CD4-positive, alpha-beta T cell (primary cell): ENCODE measurements at regions of chr9 and their contacts with region 1.

Region 1: DNA sequence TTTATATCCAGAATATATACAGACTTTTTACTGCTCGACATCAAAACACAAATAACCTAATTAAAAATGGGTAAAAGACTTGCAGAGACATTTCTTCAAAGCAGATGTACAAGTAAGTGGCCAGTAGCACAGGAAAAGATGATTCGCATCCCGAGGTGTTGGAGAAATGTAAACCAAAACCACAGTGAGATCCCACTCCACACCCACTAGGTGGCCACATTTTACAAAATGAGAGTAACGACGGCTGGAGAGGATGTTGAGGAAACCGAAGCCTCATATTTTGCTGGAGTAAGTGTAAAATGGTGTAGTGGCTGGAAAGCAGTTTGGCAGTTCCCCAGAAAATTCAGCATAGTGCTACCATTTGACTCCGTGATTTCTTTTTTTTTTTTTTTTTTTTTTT is 21.2 kb upstream of the GBGT1 start:
- DNase-seq: peak in 7 of 14 experiments; percentile 16 to 70 (median 42)
- ATAC-seq: peak; percentile 58
- H3K4me3 ChIP-seq: no peak overlapping the region
- H3K4me3 Mint-ChIP-seq: peak overlapping the region; percentile 12
- H3K27ac ChIP-seq: no peak overlapping the region
- H3K27ac Mint-ChIP-seq: no peak overlapping the region
- H3K4me1 ChIP-seq: peaks cover 12% of the 10 kb centered on the region
- H3K4me1 Mint-ChIP-seq: peaks cover 19% of the 10 kb centered on the region
- H3K27me3 ChIP-seq: peaks cover 8 to 14% of the 10 kb centered on the region in 2 experiments
- H3K27me3 Mint-ChIP-seq: peaks cover 31% of the 10 kb centered on the region
- CTCF ChIP-seq: peak; percentile 55

Region 2: DNA sequence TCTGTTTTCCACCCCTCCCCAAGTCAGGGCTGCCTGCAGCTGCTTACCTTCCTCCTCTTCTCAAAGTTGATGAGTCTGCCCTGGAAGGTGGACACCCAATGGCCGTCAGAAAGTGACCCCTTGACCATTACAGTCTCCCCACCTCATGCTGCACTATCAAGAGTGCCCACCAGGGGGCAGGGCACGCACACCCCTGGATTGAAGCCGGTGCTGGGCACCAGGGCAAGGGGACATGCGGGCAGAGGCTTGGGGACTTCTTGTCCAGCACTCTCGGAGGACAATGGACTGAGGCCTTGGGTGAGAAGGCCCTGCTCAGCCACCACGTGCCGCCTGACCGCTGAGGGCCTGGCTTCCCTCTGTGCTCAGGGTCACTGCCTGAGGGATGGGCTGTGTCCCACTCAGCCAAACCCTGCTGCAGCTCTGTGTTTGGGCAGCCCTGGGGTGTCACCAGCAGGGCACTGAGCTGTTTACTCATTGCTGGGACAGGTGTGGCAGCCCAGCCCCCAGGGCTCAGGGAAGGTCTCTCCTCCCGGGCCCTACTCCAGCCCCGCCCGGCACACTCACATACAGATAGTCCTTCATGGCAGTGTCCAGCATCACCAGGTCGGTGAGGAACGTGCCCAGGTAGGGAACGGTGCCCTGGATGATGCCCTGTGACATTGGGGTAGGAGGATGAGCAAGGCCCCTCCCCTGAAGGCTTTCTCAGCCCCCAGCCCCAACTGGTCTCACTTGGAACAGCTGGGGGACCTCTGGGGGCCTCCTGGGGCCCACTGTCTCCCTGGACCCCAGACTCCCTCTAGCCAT is 81.6 kb before region 1 on chr9:
- CTCF ChIA-PET with region 1: no interaction called
- POLR2A ChIA-PET with region 1: no interaction called
- intact Hi-C with region 1: loop called (anchors 1 kb)
- DNase-seq: peak; percentile 38 to 76 (median 50)
- ATAC-seq: peak; percentile 50
- H3K4me3 ChIP-seq: no peak overlapping the region
- H3K4me3 Mint-ChIP-seq: peak overlapping the region; percentile 11
- H3K27ac ChIP-seq: peak overlapping the region in 1 of 2 donors; percentile 19
- H3K27ac Mint-ChIP-seq: peak overlapping the region; percentile 51
- H3K4me1 ChIP-seq: no peaks in the 10 kb centered on the region
- H3K4me1 Mint-ChIP-seq: no peaks in the 10 kb centered on the region
- H3K27me3 ChIP-seq: no peaks in the 10 kb centered on the region
- H3K27me3 Mint-ChIP-seq: no peaks in the 10 kb centered on the region
- CTCF ChIP-seq: peak; percentile 96

Region 3: GRCh38 chr9:133199648-133200321 is 14.8 kb after region 1 on chr9:
- CTCF ChIA-PET with region 1: interaction called, 4 read pairs
- POLR2A ChIA-PET with region 1: no interaction called
- intact Hi-C with region 1: loop called in 1 of 2 experiments (anchors 1 kb)
- DNase-seq: peak in 9 of 14 experiments; percentile 31 to 66 (median 43)
- ATAC-seq: peak; percentile 96
- H3K4me3 ChIP-seq: peak overlapping the region; percentile 34
- H3K4me3 Mint-ChIP-seq: peak overlapping the region; percentile 81
- H3K27ac ChIP-seq: peak overlapping the region in 1 of 2 donors; percentile 7
- H3K27ac Mint-ChIP-seq: peak overlapping the region; percentile 58
- H3K4me1 ChIP-seq: peaks cover 2% of the 10 kb centered on the region
- H3K4me1 Mint-ChIP-seq: peaks cover 10% of the 10 kb centered on the region
- H3K27me3 ChIP-seq: peaks cover 2 to 8% of the 10 kb centered on the region in 2 experiments
- H3K27me3 Mint-ChIP-seq: peaks cover 5% of the 10 kb centered on the region
- CTCF ChIP-seq: peak; percentile 58

Region 4: GRCh38 chr9:133406480-133407307 is 221.7 kb after region 1 on chr9:
- CTCF ChIA-PET with region 1: no interaction called
- POLR2A ChIA-PET with region 1: no interaction called
- intact Hi-C with region 1: loop called (anchors 1 to 2 kb)
- DNase-seq: peak; percentile 68 to 89 (median 74)
- ATAC-seq: peak; percentile 93
- H3K4me3 ChIP-seq: no peak overlapping the region
- H3K4me3 Mint-ChIP-seq: no peak overlapping the region
- H3K27ac ChIP-seq: no peak overlapping the region
- H3K27ac Mint-ChIP-seq: peak overlapping the region; percentile 73
- H3K4me1 ChIP-seq: peaks cover 9% of the 10 kb centered on the region
- H3K4me1 Mint-ChIP-seq: peaks cover 6% of the 10 kb centered on the region
- H3K27me3 ChIP-seq: no peaks in the 10 kb centered on the region
- H3K27me3 Mint-ChIP-seq: no peaks in the 10 kb centered on the region
- CTCF ChIP-seq: peak; percentile 91

Region 5: DNA sequence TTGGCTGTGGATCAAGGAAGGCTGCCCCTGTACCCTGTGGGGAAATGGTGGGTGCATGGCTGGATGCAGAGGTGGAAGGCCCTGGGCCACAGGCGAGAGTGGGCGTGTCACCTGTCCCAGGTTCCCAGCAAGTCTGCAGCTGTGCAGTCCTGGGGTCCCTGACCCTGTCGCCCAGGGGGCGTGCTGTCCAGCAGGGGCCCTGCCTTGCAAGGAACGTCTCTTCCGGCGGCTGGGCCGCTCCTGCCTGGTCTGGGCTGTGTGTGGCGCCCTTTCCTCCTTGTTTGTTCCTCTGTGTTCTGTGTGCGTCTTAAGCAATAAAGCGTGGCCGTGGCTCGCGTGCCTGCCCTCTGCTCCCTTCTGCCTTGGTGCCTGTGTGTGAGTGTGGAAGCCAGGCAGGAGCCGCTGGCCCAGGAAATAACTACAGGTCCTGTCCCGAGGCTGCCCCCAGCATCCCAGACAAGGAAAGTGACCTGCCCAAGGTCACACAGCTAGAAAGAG is 285.5 kb after region 1 on chr9:
- CTCF ChIA-PET with region 1: no interaction called
- POLR2A ChIA-PET with region 1: no interaction called
- intact Hi-C with region 1: no loop called
- DNase-seq: no peak
- ATAC-seq: no peak
- H3K4me3 ChIP-seq: no peak overlapping the region
- H3K4me3 Mint-ChIP-seq: no peak overlapping the region
- H3K27ac ChIP-seq: no peak overlapping the region
- H3K27ac Mint-ChIP-seq: no peak overlapping the region
- H3K4me1 ChIP-seq: no peaks in the 10 kb centered on the region
- H3K4me1 Mint-ChIP-seq: no peaks in the 10 kb centered on the region
- H3K27me3 ChIP-seq: no peaks in the 10 kb centered on the region
- H3K27me3 Mint-ChIP-seq: no peaks in the 10 kb centered on the region
- CTCF ChIP-seq: no peak